ENCODE measurements at regions of chr2 and their contacts with region 1.

Region 1: GRCh38 chr2:44981136-44982108 is 27.8 kb downstream of the SIX2 start:
- DNase-seq: peak; percentile 80
- H3K4me3 Mint-ChIP-seq: no peak overlapping the region
- H3K27ac Mint-ChIP-seq: no peak overlapping the region
- H3K4me1 Mint-ChIP-seq: no peaks in the 10 kb centered on the region
- H3K27me3 Mint-ChIP-seq: peaks cover 14% of the 10 kb centered on the region

Region 2: GRCh38 chr2:44753552-44754285 is 227.7 kb before region 1 on chr2:
- CTCF ChIA-PET with region 1: no interaction called
- intact Hi-C with region 1: no loop called
- DNase-seq: no peak
- H3K4me3 Mint-ChIP-seq: no peak overlapping the region
- H3K27ac Mint-ChIP-seq: no peak overlapping the region
- H3K4me1 Mint-ChIP-seq: no peaks in the 10 kb centered on the region
- H3K27me3 Mint-ChIP-seq: no peaks in the 10 kb centered on the region

Region 3: DNA sequence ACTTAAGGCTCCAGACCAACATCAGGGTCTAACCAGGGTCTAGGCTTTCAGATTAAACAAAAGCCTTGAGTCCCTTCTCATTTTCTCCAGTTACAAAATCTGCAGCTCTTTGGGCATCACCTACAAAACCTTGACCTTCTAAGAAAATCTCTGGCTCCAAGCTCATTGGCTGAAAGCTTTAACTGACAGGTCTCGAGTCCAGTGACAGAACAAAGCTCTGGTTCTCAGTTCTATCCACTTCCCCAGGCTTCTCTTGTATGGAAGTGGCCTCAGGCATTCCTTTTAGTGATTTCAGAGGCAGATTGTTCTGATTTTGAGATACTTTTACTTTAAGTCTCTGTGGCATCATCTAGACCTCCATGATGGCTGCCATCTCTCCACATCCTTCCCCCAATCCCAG is 16.5 kb after region 1 on chr2:
- CTCF ChIA-PET with region 1: interaction called, 10 read pairs
- intact Hi-C with region 1: no loop called
- DNase-seq: no peak
- H3K4me3 Mint-ChIP-seq: no peak overlapping the region
- H3K27ac Mint-ChIP-seq: no peak overlapping the region
- H3K4me1 Mint-ChIP-seq: peaks cover 10% of the 10 kb centered on the region
- H3K27me3 Mint-ChIP-seq: peaks cover 73% of the 10 kb centered on the region

Region 4: DNA sequence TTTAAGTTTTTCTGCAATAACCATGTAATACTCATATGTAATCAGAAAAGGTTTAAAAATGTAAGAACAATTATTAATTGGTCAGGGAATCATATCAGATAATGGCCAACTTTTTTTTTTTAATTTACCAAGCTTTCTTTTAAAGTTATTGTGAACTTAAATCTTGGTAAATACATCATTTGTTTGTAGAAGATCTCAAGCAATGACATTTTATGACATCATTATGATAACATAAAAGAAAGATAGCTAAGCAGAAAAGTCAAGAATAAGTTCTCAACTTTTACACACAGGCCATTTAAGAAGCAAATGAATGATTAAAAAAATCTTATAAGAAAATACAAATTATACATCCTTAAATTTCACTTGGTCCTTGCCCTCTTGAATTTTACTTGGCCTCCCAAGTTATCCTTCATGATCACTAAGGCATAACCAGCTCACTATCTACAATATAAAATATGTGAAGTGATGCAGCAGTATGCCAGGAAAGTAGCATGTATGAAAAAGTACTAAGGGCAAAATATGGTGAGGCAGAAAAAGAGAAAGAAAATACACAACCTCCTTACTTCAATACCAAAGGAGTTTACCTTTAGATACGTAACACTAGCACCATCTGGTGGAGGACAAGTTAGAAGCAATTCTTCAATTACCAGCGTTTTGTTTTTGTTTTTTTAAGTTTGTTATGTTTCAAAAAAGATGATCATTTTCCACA is 513.0 kb after region 1 on chr2:
- CTCF ChIA-PET with region 1: interaction called, 46 read pairs
- intact Hi-C with region 1: loop called (anchors 1 kb)
- DNase-seq: no peak
- H3K4me3 Mint-ChIP-seq: no peak overlapping the region
- H3K27ac Mint-ChIP-seq: no peak overlapping the region
- H3K4me1 Mint-ChIP-seq: peaks cover 30% of the 10 kb centered on the region
- H3K27me3 Mint-ChIP-seq: no peaks in the 10 kb centered on the region

Region 5: GRCh38 chr2:45611020-45611737 is 629.8 kb after region 1 on chr2 and contains the start of gene SRBD1:
- CTCF ChIA-PET with region 1: no interaction called
- intact Hi-C with region 1: loop called (anchors 1 kb)
- DNase-seq: peak; percentile 96
- H3K4me3 Mint-ChIP-seq: peak within 1 kb of the TSS; percentile 98
- H3K27ac Mint-ChIP-seq: peak within 1 kb of the TSS; percentile 98
- H3K4me1 Mint-ChIP-seq: peaks cover 19% of the 10 kb centered on the region
- H3K27me3 Mint-ChIP-seq: no peaks in the 10 kb centered on the region
- total RNA-seq, gene SRBD1: 21.3 to 22.6 TPM

Region 6: GRCh38 chr2:45935791-45936622 is 954.6 kb after region 1 on chr2:
- CTCF ChIA-PET with region 1: no interaction called
- intact Hi-C with region 1: loop called (anchors 5 kb)
- DNase-seq: peak; percentile 76
- H3K4me3 Mint-ChIP-seq: no peak overlapping the region
- H3K27ac Mint-ChIP-seq: no peak overlapping the region
- H3K4me1 Mint-ChIP-seq: peaks cover 3% of the 10 kb centered on the region
- H3K27me3 Mint-ChIP-seq: no peaks in the 10 kb centered on the region

Measured in activated naive CD4-positive, alpha-beta T cell treated with anti-CD3 and anti-CD28 coated beads for 36 hours (primary cell).